Heart left ventricle (tissue), 16 donors: ENCODE measurements at regions of chr11 and their contacts with region 1.

Region 1: DNA sequence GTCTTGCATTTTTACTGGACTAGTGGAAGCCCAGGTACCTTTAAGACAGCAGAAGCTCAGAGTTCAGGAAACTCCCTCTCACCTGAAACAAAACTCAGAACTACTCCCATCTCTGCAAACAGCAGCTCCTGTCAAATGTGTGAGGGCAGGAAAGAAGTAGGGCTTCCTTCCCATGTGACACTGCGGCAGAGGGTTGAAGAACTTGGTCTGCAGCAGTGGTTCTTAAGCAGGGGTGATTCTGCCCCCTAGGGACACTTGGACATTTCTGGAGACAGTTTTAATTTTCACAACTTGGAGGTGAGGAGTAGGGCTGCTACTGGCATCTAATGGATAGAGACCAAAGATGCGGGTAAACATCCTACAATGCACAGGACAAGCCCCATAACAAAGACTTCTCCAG is 63.4 kb downstream of the RCN1 start:
- DNase-seq: no peak
- ATAC-seq: no peak
- H3K4me3 ChIP-seq: no peak overlapping the region
- H3K27ac ChIP-seq: no peak overlapping the region
- H3K4me1 ChIP-seq: peaks cover 0 to 13% (median 0%) of the 10 kb centered on the region in 12 donors
- H3K27me3 ChIP-seq: peaks cover 0 to 8% (median 0%) of the 10 kb centered on the region in 9 donors
- CTCF ChIP-seq: peak in 1 of 12 donors; percentile 19
- POLR2A ChIP-seq: no peak

Region 2: DNA sequence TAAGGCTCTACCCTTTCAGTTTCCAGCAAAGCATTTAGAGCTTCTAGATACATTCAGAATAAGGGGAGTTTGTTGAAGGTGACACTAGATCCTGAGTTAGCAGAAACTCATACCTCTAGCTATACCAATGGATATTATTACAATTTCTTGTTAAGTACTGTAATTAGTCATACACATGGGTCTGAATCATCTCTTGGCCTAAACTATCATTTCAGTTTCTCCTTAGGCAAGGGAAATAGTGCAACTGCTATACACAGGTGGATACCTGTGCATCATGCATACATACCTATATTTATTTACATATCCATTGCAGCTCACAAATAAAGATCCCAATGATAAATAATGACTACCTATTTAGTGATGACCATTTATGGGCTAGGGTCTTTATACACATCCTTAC is 298.0 kb before region 1 on chr11:
- intact Hi-C with region 1: no loop called
- DNase-seq: no peak
- ATAC-seq: no peak
- H3K4me3 ChIP-seq: no peak overlapping the region
- H3K27ac ChIP-seq: no peak overlapping the region
- H3K4me1 ChIP-seq: no peaks in the 10 kb centered on the region
- H3K27me3 ChIP-seq: peaks cover 0 to 11% (median 0%) of the 10 kb centered on the region in 9 donors
- CTCF ChIP-seq: no peak
- POLR2A ChIP-seq: no peak

Region 3: DNA sequence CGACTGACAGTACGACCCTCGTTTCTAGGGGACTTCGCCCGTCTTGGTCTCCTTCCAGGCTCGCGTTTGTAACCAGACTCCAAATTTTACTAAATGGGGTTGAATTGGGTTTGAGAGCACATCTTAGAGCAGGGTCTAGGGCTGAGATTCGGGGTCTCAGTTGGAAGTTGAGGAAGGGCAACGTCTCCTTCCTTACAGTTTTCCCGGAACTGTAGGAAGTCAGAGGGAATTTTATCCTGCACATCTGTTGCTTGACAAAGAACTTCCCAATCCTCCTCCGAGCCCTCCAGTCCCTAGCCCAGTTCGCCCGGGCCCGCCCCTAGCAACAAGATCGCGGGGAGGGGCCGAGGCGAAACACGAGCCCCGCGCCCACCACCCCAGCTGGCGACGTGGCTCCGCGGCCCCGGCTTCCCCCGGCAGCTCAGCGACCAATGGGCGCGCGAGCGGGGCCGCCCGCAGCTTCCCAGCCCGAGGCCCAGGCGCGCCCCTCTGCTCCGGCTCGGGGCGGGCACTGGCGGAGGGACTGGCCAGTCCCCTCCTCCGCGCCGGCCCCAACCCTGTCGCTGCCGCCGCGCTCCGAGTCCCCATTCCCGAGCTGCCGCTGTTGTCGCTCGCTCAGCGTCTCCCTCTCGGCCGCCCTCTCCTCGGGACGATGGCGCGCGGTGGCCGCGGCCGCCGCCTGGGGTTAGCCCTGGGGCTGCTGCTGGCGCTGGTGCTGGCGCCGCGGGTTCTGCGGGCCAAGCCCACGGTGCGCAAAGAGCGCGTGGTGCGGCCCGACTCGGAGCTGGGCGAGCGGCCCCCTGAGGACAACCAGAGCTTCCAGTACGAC is 63.5 kb before region 1 on chr11 and contains the start of gene RCN1:
- intact Hi-C with region 1: loop called in 1 of 10 experiments (anchors 5 kb)
- DNase-seq: peak; percentile 78 to 86 (median 79)
- ATAC-seq: peak; percentile 76 to 93 (median 88)
- H3K4me3 ChIP-seq: peak within 1 kb of the TSS; percentile 52 to 94 (median 79)
- H3K27ac ChIP-seq: peak within 1 kb of the TSS; percentile 39 to 94 (median 88)
- H3K4me1 ChIP-seq: peaks cover 0 to 59% (median 35%) of the 10 kb centered on the region in 12 donors
- H3K27me3 ChIP-seq: no peaks in the 10 kb centered on the region
- CTCF ChIP-seq: no peak
- POLR2A ChIP-seq: peak in 1 of 2 donors; percentile 51
- total RNA-seq, gene RCN1: 14.4 to 76.5 (median 25.3) TPM

Region 4: DNA sequence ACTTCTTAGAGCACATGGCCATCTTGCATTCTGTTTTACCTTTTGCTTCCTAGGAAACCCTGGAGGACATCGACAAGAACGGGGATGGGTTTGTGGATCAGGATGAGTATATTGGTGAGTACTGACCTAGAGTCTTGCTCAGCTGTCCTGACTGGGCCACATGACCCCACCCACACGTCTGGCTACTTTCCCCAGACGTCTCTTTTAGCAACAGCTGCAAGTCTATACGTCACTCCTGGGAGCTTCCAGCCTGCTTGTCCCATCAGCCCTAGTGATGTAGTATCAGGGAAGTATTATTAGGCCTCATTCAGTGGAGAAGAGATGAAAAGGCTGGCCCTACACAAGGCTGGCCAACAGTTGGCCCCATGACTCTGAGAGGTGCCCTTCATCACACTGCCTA is 53.8 kb before region 1 on chr11:
- intact Hi-C with region 1: loop called in 1 of 10 experiments (anchors 5 kb)
- DNase-seq: peak in 3 of 5 donors; percentile 36 to 59 (median 40)
- ATAC-seq: peak in 1 of 4 donors; percentile 76
- H3K4me3 ChIP-seq: no peak overlapping the region
- H3K27ac ChIP-seq: no peak overlapping the region
- H3K4me1 ChIP-seq: peaks cover 0 to 21% (median 6%) of the 10 kb centered on the region in 12 donors
- H3K27me3 ChIP-seq: no peaks in the 10 kb centered on the region
- CTCF ChIP-seq: no peak
- POLR2A ChIP-seq: no peak